ENCODE measurements at regions of chr2 and their contacts with region 1.

Region 1: GRCh38 chr2:143582046-143582747 is 453.0 kb downstream of the ARHGAP15 start:
- DNase-seq: peak in 1 of 10 donors; percentile 29
- H3K4me3 ChIP-seq: peak overlapping the region in 41 of 59 donors; percentile 0 to 47 (median 26)
- H3K27ac ChIP-seq: peak overlapping the region in 15 of 59 donors; percentile 0 to 62 (median 38)
- H3K27me3 ChIP-seq: no peaks in the 10 kb centered on the region
- CTCF ChIP-seq: peak in 51 of 56 donors; percentile 13 to 70 (median 47)

Region 2: DNA sequence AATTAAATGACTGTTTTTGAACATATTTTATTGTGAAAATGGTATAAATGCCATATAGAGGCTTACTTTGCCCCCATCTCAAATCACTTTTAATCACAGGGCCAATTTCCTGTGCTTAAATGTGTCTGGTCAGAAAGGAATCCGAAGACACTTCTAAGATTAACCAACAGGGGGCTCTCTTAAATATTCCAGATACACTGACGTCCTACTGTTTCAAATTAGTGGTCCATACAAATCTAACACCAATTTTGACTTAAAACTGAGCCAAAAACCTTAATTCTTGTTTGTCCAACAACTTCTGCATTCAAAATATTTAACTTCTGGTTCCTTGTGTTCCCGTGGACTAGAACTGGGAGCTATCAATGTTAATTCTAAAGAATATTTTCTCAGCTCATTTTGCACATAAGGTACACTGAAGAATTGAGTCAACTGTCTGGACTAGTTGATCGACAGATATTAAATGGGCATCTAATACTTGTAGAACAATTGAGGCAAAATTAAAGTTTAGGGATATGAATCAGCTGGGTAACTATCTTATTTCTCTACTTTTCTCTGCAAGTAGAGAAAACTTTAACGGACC is 104.5 kb after region 1 on chr2:
- intact Hi-C with region 1: loop called (anchors 10 kb)
- DNase-seq: no peak
- H3K4me3 ChIP-seq: no peak overlapping the region
- H3K27ac ChIP-seq: no peak overlapping the region
- H3K27me3 ChIP-seq: no peaks in the 10 kb centered on the region
- CTCF ChIP-seq: peak; percentile 47 to 78 (median 64)

Region 3: GRCh38 chr2:144320491-144320890 is 738.3 kb after region 1 on chr2:
- intact Hi-C with region 1: loop called in 1 of 2 experiments (anchors 10 kb)
- DNase-seq: peak in 2 of 10 donors; percentile 9 to 51
- H3K4me3 ChIP-seq: no peak overlapping the region
- H3K27ac ChIP-seq: peak overlapping the region in 6 of 59 donors; percentile 13 to 38 (median 26)
- H3K27me3 ChIP-seq: no peaks in the 10 kb centered on the region
- CTCF ChIP-seq: no peak